Activated CD4-positive, alpha-beta memory T cell treated with anti-CD3 and anti-CD28 coated beads for 36 hours (primary cell): ENCODE measurements at regions of chr10 and their contacts with region 1.

Region 1: DNA sequence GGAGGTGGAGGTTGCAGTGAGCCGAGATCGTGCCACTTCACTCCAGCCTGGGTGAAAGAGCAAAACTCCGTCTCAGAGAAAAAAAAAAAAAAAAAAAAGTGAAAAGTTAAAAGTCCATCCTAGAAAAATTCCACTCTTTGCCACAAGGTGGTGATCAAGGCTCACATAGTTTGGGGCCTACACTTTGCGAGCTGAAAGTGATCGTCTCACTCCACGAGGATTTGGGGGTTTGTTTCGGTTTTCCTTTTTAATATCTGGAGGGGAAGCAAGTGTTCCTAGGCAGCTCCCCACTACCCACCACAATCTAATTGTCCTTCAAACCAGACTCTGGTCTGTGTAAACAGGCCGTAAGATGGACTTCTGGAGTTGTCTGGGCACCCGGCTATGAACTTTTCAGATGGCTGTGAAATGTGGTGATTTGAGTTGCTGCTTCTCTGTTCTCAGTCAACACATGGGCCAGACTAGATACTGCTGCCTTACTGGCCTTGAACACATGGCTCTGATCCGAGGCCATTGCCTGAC is 27.1 kb downstream of the PRLHR start:
- DNase-seq: peak; percentile 45
- H3K4me3 Mint-ChIP-seq: no peak overlapping the region
- H3K27ac Mint-ChIP-seq: no peak overlapping the region
- H3K4me1 Mint-ChIP-seq: peaks cover 2% of the 10 kb centered on the region
- H3K27me3 Mint-ChIP-seq: no peaks in the 10 kb centered on the region

Region 2: GRCh38 chr10:118488710-118489497 is 79.5 kb before region 1 on chr10:
- CTCF ChIA-PET with region 1: no interaction called
- POLR2A ChIA-PET with region 1: no interaction called
- intact Hi-C with region 1: no loop called
- DNase-seq: no peak
- H3K4me3 Mint-ChIP-seq: no peak overlapping the region
- H3K27ac Mint-ChIP-seq: no peak overlapping the region
- H3K4me1 Mint-ChIP-seq: no peaks in the 10 kb centered on the region
- H3K27me3 Mint-ChIP-seq: peaks cover 2% of the 10 kb centered on the region

Region 3: DNA sequence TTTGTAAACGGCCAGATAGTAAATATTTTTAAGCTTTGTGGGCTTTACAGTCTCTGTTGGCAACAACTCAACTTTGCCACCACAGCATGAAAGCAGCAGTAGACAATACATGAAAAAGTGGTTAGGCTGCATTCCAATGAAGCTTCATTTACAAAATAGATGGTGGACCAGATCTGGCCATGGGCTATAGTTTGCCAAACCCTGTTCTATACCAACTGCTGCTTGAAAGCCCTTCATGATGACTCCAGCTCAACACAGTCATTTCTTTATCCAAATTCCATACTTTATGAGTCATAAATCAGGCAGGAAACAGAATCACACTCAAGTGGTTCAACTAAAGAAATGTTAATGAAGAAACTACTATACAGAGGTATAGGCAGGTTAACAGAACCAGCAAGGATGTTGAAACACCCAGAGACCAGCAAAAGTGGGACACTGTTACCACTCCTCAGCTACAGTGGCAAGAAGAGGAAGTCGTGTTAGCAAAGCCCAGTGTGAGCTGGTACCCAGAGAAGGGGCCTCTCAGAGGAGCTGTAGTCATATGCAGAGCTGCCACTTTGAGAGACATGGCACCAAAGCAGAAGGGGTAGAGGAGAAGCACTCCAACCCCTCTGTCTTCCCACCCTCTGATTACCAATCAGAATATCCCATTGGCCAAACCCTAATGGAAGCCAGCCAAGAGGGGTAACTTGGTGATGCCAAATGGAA is 45.4 kb before region 1 on chr10:
- CTCF ChIA-PET with region 1: no interaction called
- POLR2A ChIA-PET with region 1: no interaction called
- intact Hi-C with region 1: no loop called
- DNase-seq: no peak
- H3K4me3 Mint-ChIP-seq: no peak overlapping the region
- H3K27ac Mint-ChIP-seq: no peak overlapping the region
- H3K4me1 Mint-ChIP-seq: no peaks in the 10 kb centered on the region
- H3K27me3 Mint-ChIP-seq: peaks cover 32% of the 10 kb centered on the region

Region 4: DNA sequence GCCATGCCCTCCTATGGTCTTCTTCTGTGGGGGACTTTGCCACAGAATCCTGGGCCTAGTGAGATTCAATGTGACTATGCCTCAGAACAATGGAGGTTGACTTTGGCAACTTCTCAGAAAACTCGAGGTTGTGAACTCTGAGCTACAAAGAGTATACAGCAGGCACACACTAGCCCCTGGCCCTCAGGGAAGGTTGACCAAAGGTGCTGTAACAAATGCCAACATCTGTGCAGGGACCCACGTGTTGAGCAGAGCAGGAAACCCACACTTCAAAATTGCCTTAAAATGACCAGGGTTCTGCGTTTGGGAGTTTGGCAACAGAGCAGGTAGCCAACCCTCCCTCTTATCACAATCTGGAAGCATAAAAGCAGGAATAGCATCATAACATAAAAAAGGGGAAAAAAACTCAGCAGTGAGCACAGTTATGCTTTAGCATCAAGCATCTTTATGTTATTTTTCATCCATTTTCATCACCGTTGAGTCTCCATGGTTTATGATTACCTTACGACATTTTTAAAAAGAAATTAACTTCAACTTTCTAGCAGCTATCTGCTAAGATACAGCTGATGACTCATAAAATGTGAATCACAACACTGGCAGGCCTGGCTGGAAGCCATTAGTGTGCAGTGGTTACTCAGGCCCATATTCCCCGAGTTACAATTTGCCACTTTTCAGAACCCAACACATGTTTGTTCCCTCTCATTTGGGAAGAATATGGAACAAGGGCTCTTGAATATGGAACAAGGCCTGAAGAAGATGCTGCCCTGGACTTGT is 16.0 kb after region 1 on chr10:
- CTCF ChIA-PET with region 1: interaction called, 17 read pairs
- POLR2A ChIA-PET with region 1: interaction called, 4 read pairs
- intact Hi-C with region 1: no loop called
- DNase-seq: no peak
- H3K4me3 Mint-ChIP-seq: no peak overlapping the region
- H3K27ac Mint-ChIP-seq: no peak overlapping the region
- H3K4me1 Mint-ChIP-seq: no peaks in the 10 kb centered on the region
- H3K27me3 Mint-ChIP-seq: no peaks in the 10 kb centered on the region

Region 5: GRCh38 chr10:118720685-118721538 is 152.5 kb after region 1 on chr10:
- CTCF ChIA-PET with region 1: interaction called, 103 read pairs
- POLR2A ChIA-PET with region 1: no interaction called
- intact Hi-C with region 1: loop called (anchors 1 kb)
- DNase-seq: peak; percentile 47
- H3K4me3 Mint-ChIP-seq: no peak overlapping the region
- H3K27ac Mint-ChIP-seq: no peak overlapping the region
- H3K4me1 Mint-ChIP-seq: no peaks in the 10 kb centered on the region
- H3K27me3 Mint-ChIP-seq: no peaks in the 10 kb centered on the region

Region 6: GRCh38 chr10:118729641-118730258 is 161.4 kb after region 1 on chr10:
- CTCF ChIA-PET with region 1: interaction called, 12 read pairs
- POLR2A ChIA-PET with region 1: no interaction called
- intact Hi-C with region 1: no loop called
- DNase-seq: no peak
- H3K4me3 Mint-ChIP-seq: no peak overlapping the region
- H3K27ac Mint-ChIP-seq: peak overlapping the region; percentile 23
- H3K4me1 Mint-ChIP-seq: peaks cover 52% of the 10 kb centered on the region
- H3K27me3 Mint-ChIP-seq: no peaks in the 10 kb centered on the region

Region 7: GRCh38 chr10:118800920-118801319 is 232.5 kb after region 1 on chr10:
- CTCF ChIA-PET with region 1: interaction called, 9 read pairs
- POLR2A ChIA-PET with region 1: no interaction called
- intact Hi-C with region 1: loop called (anchors 1 kb)
- DNase-seq: peak; percentile 22
- H3K4me3 Mint-ChIP-seq: no peak overlapping the region
- H3K27ac Mint-ChIP-seq: no peak overlapping the region
- H3K4me1 Mint-ChIP-seq: no peaks in the 10 kb centered on the region
- H3K27me3 Mint-ChIP-seq: peaks cover 11% of the 10 kb centered on the region

Region 8: GRCh38 chr10:118850418-118851061 is 282.2 kb after region 1 on chr10:
- CTCF ChIA-PET with region 1: interaction called, 12 read pairs
- POLR2A ChIA-PET with region 1: no interaction called
- intact Hi-C with region 1: loop called (anchors 1 kb)
- DNase-seq: peak; percentile 88
- H3K4me3 Mint-ChIP-seq: no peak overlapping the region
- H3K27ac Mint-ChIP-seq: no peak overlapping the region
- H3K4me1 Mint-ChIP-seq: no peaks in the 10 kb centered on the region
- H3K27me3 Mint-ChIP-seq: peaks cover 2% of the 10 kb centered on the region

Region 9: GRCh38 chr10:119028900-119029612 is 460.7 kb after region 1 on chr10:
- CTCF ChIA-PET with region 1: no interaction called
- POLR2A ChIA-PET with region 1: no interaction called
- intact Hi-C with region 1: loop called (anchors 10 kb)
- DNase-seq: peak; percentile 84
- H3K4me3 Mint-ChIP-seq: peak overlapping the region; percentile 48
- H3K27ac Mint-ChIP-seq: no peak overlapping the region
- H3K4me1 Mint-ChIP-seq: peaks cover 15% of the 10 kb centered on the region
- H3K27me3 Mint-ChIP-seq: no peaks in the 10 kb centered on the region

Region 10: GRCh38 chr10:119061352-119061751 is 493.0 kb after region 1 on chr10:
- CTCF ChIA-PET with region 1: no interaction called
- POLR2A ChIA-PET with region 1: no interaction called
- intact Hi-C with region 1: no loop called
- DNase-seq: no peak
- H3K4me3 Mint-ChIP-seq: no peak overlapping the region
- H3K27ac Mint-ChIP-seq: peak overlapping the region; percentile 13
- H3K4me1 Mint-ChIP-seq: peaks cover 18% of the 10 kb centered on the region
- H3K27me3 Mint-ChIP-seq: no peaks in the 10 kb centered on the region